Calu3 (cell line): ENCODE measurements at regions of chr1 and their contacts with region 1.

Region 1: DNA sequence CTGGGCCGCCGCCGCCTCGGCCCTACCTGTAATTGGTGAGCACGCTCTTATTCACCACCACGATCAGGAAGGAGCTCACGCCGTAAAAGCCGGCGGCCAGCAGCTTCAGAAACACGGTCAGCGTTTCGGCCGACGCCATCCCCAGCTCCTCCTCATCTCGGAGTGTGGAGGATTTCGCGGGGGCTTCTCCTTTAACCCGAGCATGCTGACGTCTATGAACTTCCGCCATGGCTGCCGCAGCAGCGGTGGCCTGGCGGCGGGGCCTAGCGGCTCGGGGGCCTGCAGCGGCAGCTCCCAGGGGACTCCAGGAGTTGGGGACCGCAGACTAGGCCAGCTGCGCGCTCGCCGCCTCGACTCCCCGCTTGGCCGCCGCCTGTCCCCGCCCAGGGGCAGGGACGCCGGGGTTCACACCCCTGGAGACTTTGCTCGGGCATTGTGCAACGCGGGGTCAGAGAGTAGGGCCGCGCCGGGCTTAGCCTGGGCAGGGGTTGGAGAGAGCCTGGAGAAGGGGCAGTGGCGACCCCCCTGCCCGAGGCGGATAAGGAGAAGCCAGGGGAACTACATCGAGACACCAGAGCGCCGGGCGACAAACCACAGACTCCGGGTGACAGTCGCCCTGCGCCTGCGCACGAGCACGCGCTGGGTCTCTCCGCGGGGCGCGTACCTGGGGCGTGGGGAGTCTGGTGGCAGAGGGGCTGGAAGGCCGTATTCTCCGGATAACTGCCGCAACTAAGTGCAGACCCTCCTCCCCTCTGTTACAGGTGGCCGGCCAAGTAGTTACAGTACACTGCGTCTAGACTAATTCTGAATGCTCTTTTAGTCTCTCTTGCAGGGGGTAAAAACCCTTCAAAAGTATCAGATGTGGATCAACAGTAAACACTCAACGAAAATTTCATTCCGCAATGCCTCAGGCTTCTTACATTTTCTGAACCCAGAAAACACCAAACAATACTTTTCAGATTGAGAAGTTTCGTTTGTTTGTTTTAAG is at the start of gene SLC35D1:
- DNase-seq: peak; percentile 68
- H3K4me3 Mint-ChIP-seq: peak within 1 kb of the TSS; percentile 72
- H3K27ac Mint-ChIP-seq: peak within 1 kb of the TSS; percentile 65
- H3K4me1 Mint-ChIP-seq: peaks cover 21% of the 10 kb centered on the region
- H3K27me3 Mint-ChIP-seq: no peaks in the 10 kb centered on the region
- CTCF ChIP-seq: no peak
- total RNA-seq, gene SLC35D1: 5.4 and 5.9 TPM in 2 replicates

Region 2: GRCh38 chr1:66981679-66982078 is 72.4 kb before region 1 on chr1:
- CTCF ChIA-PET with region 1: no interaction called
- intact Hi-C with region 1: loop called (anchors 5 kb)
- DNase-seq: no peak
- H3K4me3 Mint-ChIP-seq: no peak overlapping the region
- H3K27ac Mint-ChIP-seq: no peak overlapping the region
- H3K4me1 Mint-ChIP-seq: peaks cover 14% of the 10 kb centered on the region
- H3K27me3 Mint-ChIP-seq: no peaks in the 10 kb centered on the region
- CTCF ChIP-seq: no peak

Region 3: DNA sequence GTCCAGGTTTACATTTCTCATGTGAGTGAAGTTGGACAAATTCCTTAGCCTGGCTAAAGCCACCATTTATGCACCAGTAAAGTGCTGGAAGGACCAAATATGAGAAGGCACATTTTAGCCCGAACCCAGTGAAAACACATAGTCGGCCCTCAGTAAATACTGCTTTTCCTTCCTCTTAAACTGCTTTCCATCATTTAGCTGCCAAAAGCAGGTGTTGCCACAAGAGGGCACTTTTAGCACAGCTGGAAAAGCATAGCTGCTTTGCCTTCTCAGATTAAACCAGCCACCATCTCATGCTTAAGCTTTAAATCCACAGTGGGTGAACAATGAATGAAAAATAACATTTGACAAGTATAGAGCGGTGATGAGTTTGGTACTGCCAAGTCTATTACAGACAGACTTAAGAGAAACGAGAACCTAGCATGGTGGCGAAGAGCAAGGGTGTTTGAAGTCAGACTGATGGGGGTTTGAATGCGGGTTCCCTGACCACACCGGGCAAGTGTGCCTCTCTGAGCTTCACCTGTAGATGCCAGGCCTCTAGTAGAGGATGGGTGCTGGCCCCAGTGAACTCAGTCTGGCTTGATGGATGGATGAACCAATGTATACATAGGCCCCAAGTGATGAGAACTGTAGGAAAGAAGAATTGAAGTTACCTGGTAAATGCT is 57.9 kb before region 1 on chr1:
- CTCF ChIA-PET with region 1: no interaction called
- intact Hi-C with region 1: loop called (anchors 5 kb)
- DNase-seq: peak; percentile 59
- H3K4me3 Mint-ChIP-seq: no peak overlapping the region
- H3K27ac Mint-ChIP-seq: no peak overlapping the region
- H3K4me1 Mint-ChIP-seq: no peaks in the 10 kb centered on the region
- H3K27me3 Mint-ChIP-seq: no peaks in the 10 kb centered on the region
- CTCF ChIP-seq: peak; percentile 65

Region 4: DNA sequence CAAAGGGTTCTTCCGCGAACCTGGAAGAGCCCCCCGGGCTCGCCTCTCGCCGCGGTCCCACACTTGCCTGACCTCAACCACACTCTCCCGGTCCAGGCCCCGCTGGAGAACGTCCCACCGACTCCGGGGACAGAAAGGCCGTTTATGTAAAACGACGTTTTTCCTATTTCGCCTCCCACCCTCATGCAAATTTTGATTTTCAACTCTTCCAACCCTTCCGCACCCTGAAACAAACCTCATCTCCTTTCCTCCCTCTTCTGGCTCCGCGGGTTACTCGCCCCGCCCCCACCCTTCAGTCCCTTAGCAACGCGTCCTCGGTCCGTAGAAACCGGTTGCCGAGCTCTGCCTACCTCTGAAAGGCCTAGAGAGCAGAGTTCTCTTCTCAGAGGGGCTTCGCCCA is 80.6 kb after region 1 on chr1 and contains the start of gene C1orf141:
- CTCF ChIA-PET with region 1: no interaction called
- intact Hi-C with region 1: loop called (anchors 5 kb)
- DNase-seq: no peak
- H3K4me3 Mint-ChIP-seq: no peak within 1 kb of the TSS
- H3K27ac Mint-ChIP-seq: no peak within 1 kb of the TSS
- H3K4me1 Mint-ChIP-seq: peaks cover 26% of the 10 kb centered on the region
- H3K27me3 Mint-ChIP-seq: no peaks in the 10 kb centered on the region
- CTCF ChIP-seq: no peak
- total RNA-seq, gene C1orf141: not detected in 2 replicates